GM12878 (cell line): ENCODE measurements at regions of chr19 and their contacts with region 1.

Region 1: GRCh38 chr19:13262450-13262849 is 112.2 kb downstream of the IER2 start:
- DNase-seq: no peak
- ATAC-seq: peak; percentile 78
- H3K4me3 ChIP-seq: no peak overlapping the region
- H3K27ac ChIP-seq: no peak overlapping the region
- H3K4me1 ChIP-seq: peaks cover 16% of the 10 kb centered on the region
- H3K27me3 ChIP-seq: no peaks in the 10 kb centered on the region
- CTCF ChIP-seq: peak; percentile 46 to 68 (median 52); a peak in 4 of 6 replicates
- EP300 ChIP-seq: no peak
- POLR2A ChIP-seq: no peak
- RAD21 ChIP-seq: peak; percentile 58

Region 2: GRCh38 chr19:13104360-13104847 is 158.0 kb before region 1 on chr19:
- CTCF ChIA-PET with region 1: interaction called, 6 read pairs
- POLR2A ChIA-PET with region 1: no interaction called
- RAD21 ChIA-PET with region 1: no interaction called
- SMC1A ChIA-PET with region 1: interaction called, 3 read pairs
- in situ Hi-C with region 1: no loop called
- intact Hi-C with region 1: loop called (anchors 5 kb)
- DNase-seq: no peak
- ATAC-seq: peak; percentile 45
- H3K4me3 ChIP-seq: peak overlapping the region; percentile 61
- H3K27ac ChIP-seq: peak overlapping the region; percentile 90
- H3K4me1 ChIP-seq: peaks cover 41% of the 10 kb centered on the region
- H3K27me3 ChIP-seq: no peaks in the 10 kb centered on the region
- CTCF ChIP-seq: peak; percentile 79 to 99 (median 96)
- EP300 ChIP-seq: no peak
- POLR2A ChIP-seq: peak; percentile 72
- RAD21 ChIP-seq: peak; percentile 45; the same call in 1 of the 2 replicates

Region 3: GRCh38 chr19:13155472-13156359 is 106.7 kb before region 1 on chr19:
- CTCF ChIA-PET with region 1: interaction called, 8 read pairs
- POLR2A ChIA-PET with region 1: interaction called, 4 read pairs
- RAD21 ChIA-PET with region 1: interaction called, 6 read pairs
- SMC1A ChIA-PET with region 1: interaction called, 4 read pairs
- in situ Hi-C with region 1: no loop called
- intact Hi-C with region 1: loop called (anchors 2 kb)
- DNase-seq: no peak
- ATAC-seq: peak; percentile 28
- H3K4me3 ChIP-seq: peak overlapping the region; percentile 99
- H3K27ac ChIP-seq: peak overlapping the region; percentile 95
- H3K4me1 ChIP-seq: peaks cover 26% of the 10 kb centered on the region
- H3K27me3 ChIP-seq: no peaks in the 10 kb centered on the region
- CTCF ChIP-seq: no peak
- EP300 ChIP-seq: peak; percentile 81 to 83
- POLR2A ChIP-seq: peak; percentile 53
- RAD21 ChIP-seq: no peak

Region 4: GRCh38 chr19:13195678-13196077 is 66.8 kb before region 1 on chr19:
- CTCF ChIA-PET with region 1: interaction called, 118 read pairs
- POLR2A ChIA-PET with region 1: interaction called, 4 read pairs
- RAD21 ChIA-PET with region 1: interaction called, 25 read pairs
- SMC1A ChIA-PET with region 1: interaction called, 16 read pairs
- in situ Hi-C with region 1: no loop called
- intact Hi-C with region 1: loop called (anchors 1 kb)
- DNase-seq: no peak
- ATAC-seq: peak; percentile 88
- H3K4me3 ChIP-seq: no peak overlapping the region
- H3K27ac ChIP-seq: no peak overlapping the region
- H3K4me1 ChIP-seq: peaks cover 6% of the 10 kb centered on the region; the same call in 1 of the 2 replicates
- H3K27me3 ChIP-seq: no peaks in the 10 kb centered on the region
- CTCF ChIP-seq: peak; percentile 62 to 75 (median 75); a peak in 5 of 6 replicates
- EP300 ChIP-seq: no peak
- POLR2A ChIP-seq: no peak
- RAD21 ChIP-seq: peak; percentile 81

Region 5: GRCh38 chr19:13277104-13277809 is 14.8 kb after region 1 on chr19:
- CTCF ChIA-PET with region 1: interaction called, 14 read pairs
- POLR2A ChIA-PET with region 1: no interaction called
- RAD21 ChIA-PET with region 1: no interaction called
- SMC1A ChIA-PET with region 1: no interaction called
- in situ Hi-C with region 1: no loop called
- intact Hi-C with region 1: no loop called
- DNase-seq: peak; percentile 71
- ATAC-seq: peak; percentile 96
- H3K4me3 ChIP-seq: no peak overlapping the region
- H3K27ac ChIP-seq: 0 out of 2 replicates have a peak overlapping the region, but pooled peaks have one; percentile 24
- H3K4me1 ChIP-seq: peaks cover 11% of the 10 kb centered on the region
- H3K27me3 ChIP-seq: no peaks in the 10 kb centered on the region
- CTCF ChIP-seq: peak; percentile 43 to 79 (median 67); a peak in 5 of 6 replicates
- EP300 ChIP-seq: no peak
- POLR2A ChIP-seq: no peak
- RAD21 ChIP-seq: peak; percentile 82